ENCODE measurements at regions of chr21 and their contacts with region 1.

Region 1: GRCh38 chr21:41933313-41934086 is 20.3 kb downstream of the C2CD2 start:
- DNase-seq: peak; percentile 85
- ATAC-seq: peak; percentile 63
- H3K4me3 ChIP-seq: peak overlapping the region; percentile 63
- H3K27ac ChIP-seq: peak overlapping the region; percentile 90
- H3K4me1 ChIP-seq: peaks cover 42% of the 10 kb centered on the region
- H3K27me3 ChIP-seq: no peaks in the 10 kb centered on the region
- CTCF ChIP-seq: peak; percentile 70

Region 2: GRCh38 chr21:41167348-41168342 is 765.9 kb before region 1 on chr21 and contains the start of gene BACE2:
- CTCF ChIA-PET with region 1: no interaction called
- POLR2A ChIA-PET with region 1: no interaction called
- intact Hi-C with region 1: loop called (anchors 5 kb)
- DNase-seq: peak; percentile 74
- ATAC-seq: peak; percentile 57
- H3K4me3 ChIP-seq: peak within 1 kb of the TSS; percentile 80
- H3K27ac ChIP-seq: peak within 1 kb of the TSS; percentile 55
- H3K4me1 ChIP-seq: peaks cover 51% of the 10 kb centered on the region
- H3K27me3 ChIP-seq: no peaks in the 10 kb centered on the region
- CTCF ChIP-seq: peak; percentile 64
- total RNA-seq, gene BACE2: 89.2 and 96.2 TPM in 2 replicates

Region 3: DNA sequence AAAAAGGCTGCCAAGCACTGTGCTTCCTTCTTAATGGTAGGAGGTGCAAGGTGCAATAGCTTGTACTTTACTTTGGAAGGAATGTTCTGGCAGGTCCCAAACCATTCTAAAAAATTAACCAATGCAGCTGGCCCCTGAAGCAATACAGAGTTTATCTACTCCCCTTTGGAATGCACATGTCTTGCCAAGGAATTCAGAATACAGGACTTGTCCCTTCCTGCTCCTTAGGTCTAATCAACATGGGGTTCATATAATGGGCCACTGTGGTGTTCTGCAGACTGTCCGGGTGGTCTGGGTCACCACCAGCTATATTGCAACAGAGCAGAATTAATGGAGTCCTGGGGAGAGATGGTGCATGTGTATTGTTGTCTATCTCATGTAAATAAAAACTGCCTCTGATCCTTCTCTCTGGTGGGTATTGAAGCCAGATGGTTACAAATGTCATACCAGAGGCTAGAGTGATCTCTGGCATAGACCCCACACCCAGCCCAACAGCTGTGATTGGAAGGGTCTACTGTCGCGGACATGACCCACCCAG is 279.5 kb before region 1 on chr21:
- CTCF ChIA-PET with region 1: no interaction called
- POLR2A ChIA-PET with region 1: no interaction called
- intact Hi-C with region 1: no loop called
- DNase-seq: peak; percentile 45
- ATAC-seq: peak; percentile 25
- H3K4me3 ChIP-seq: no peak overlapping the region
- H3K27ac ChIP-seq: no peak overlapping the region
- H3K4me1 ChIP-seq: peaks cover 39% of the 10 kb centered on the region
- H3K27me3 ChIP-seq: no peaks in the 10 kb centered on the region
- CTCF ChIP-seq: no peak

Region 4: GRCh38 chr21:41802684-41803083 is 130.8 kb before region 1 on chr21:
- CTCF ChIA-PET with region 1: no interaction called
- POLR2A ChIA-PET with region 1: no interaction called
- intact Hi-C with region 1: no loop called
- DNase-seq: peak; percentile 57
- ATAC-seq: peak; percentile 73
- H3K4me3 ChIP-seq: peak overlapping the region; percentile 19; the same call in 1 of the 2 replicates
- H3K27ac ChIP-seq: peak overlapping the region; percentile 62
- H3K4me1 ChIP-seq: peaks cover 14% of the 10 kb centered on the region
- H3K27me3 ChIP-seq: no peaks in the 10 kb centered on the region
- CTCF ChIP-seq: no peak

Region 5: GRCh38 chr21:41953831-41954653 is 20.5 kb after region 1 on chr21 and contains the start of gene C2CD2:
- CTCF ChIA-PET with region 1: interaction called, 3 read pairs
- POLR2A ChIA-PET with region 1: interaction called, 4 read pairs
- intact Hi-C with region 1: loop called (anchors 1 kb)
- DNase-seq: peak; percentile 79
- ATAC-seq: peak; percentile 44
- H3K4me3 ChIP-seq: peak within 1 kb of the TSS; percentile 76
- H3K27ac ChIP-seq: peak within 1 kb of the TSS; percentile 98
- H3K4me1 ChIP-seq: peaks cover 63% of the 10 kb centered on the region
- H3K27me3 ChIP-seq: no peaks in the 10 kb centered on the region
- CTCF ChIP-seq: 0 out of 2 replicates have a peak, but pooled peaks have one; percentile 8
- total RNA-seq, gene C2CD2: 50.4 and 81.4 TPM in 2 replicates

Region 6: GRCh38 chr21:42009831-42010523 is 76.5 kb after region 1 on chr21 and contains the start of gene ZBTB21:
- CTCF ChIA-PET with region 1: no interaction called
- POLR2A ChIA-PET with region 1: interaction called, 4 read pairs
- intact Hi-C with region 1: loop called (anchors 1 kb)
- DNase-seq: peak; percentile 99
- ATAC-seq: peak; percentile 84
- H3K4me3 ChIP-seq: peak within 1 kb of the TSS; percentile 80
- H3K27ac ChIP-seq: peak within 1 kb of the TSS; percentile 80
- H3K4me1 ChIP-seq: peaks cover 25% of the 10 kb centered on the region
- H3K27me3 ChIP-seq: no peaks in the 10 kb centered on the region
- CTCF ChIP-seq: no peak
- total RNA-seq, gene ZBTB21: 8.1 and 9.2 TPM in 2 replicates

Region 7: GRCh38 chr21:42097860-42098454 is 164.5 kb after region 1 on chr21:
- CTCF ChIA-PET with region 1: no interaction called
- POLR2A ChIA-PET with region 1: no interaction called
- intact Hi-C with region 1: loop called (anchors 5 kb)
- DNase-seq: peak; percentile 96
- ATAC-seq: peak; percentile 87
- H3K4me3 ChIP-seq: peak overlapping the region; percentile 31; the same call in 1 of the 2 replicates
- H3K27ac ChIP-seq: peak overlapping the region; percentile 94
- H3K4me1 ChIP-seq: peaks cover 39% of the 10 kb centered on the region
- H3K27me3 ChIP-seq: no peaks in the 10 kb centered on the region
- CTCF ChIP-seq: no peak

Region 8: GRCh38 chr21:42164064-42164789 is 230.7 kb after region 1 on chr21:
- CTCF ChIA-PET with region 1: no interaction called
- POLR2A ChIA-PET with region 1: no interaction called
- intact Hi-C with region 1: no loop called
- DNase-seq: peak; percentile 44
- ATAC-seq: peak; percentile 79
- H3K4me3 ChIP-seq: no peak overlapping the region
- H3K27ac ChIP-seq: no peak overlapping the region
- H3K4me1 ChIP-seq: 0 out of 2 replicates have a peak, but pooled peaks cover 3% of the 10 kb centered on the region
- H3K27me3 ChIP-seq: no peaks in the 10 kb centered on the region
- CTCF ChIP-seq: peak; percentile 75

Measured in PC-3 (cell line).